ENCODE measurements at regions of chr2 and their contacts with region 1.

Region 1: GRCh38 chr2:166180951-166181812 is 53.4 kb upstream of the SCN1A start:
- DNase-seq: peak; percentile 51
- ATAC-seq: peak; percentile 60
- H3K4me3 Mint-ChIP-seq: no peak overlapping the region
- H3K27ac Mint-ChIP-seq: no peak overlapping the region
- H3K4me1 Mint-ChIP-seq: no peaks in the 10 kb centered on the region
- H3K27me3 Mint-ChIP-seq: no peaks in the 10 kb centered on the region

Region 2: GRCh38 chr2:166197446-166197845 is 16.3 kb after region 1 on chr2:
- CTCF ChIA-PET with region 1: interaction called, 12 read pairs
- POLR2A ChIA-PET with region 1: no interaction called
- DNase-seq: no peak
- ATAC-seq: no peak
- H3K4me3 Mint-ChIP-seq: no peak overlapping the region
- H3K27ac Mint-ChIP-seq: no peak overlapping the region
- H3K4me1 Mint-ChIP-seq: no peaks in the 10 kb centered on the region
- H3K27me3 Mint-ChIP-seq: no peaks in the 10 kb centered on the region

Region 3: DNA sequence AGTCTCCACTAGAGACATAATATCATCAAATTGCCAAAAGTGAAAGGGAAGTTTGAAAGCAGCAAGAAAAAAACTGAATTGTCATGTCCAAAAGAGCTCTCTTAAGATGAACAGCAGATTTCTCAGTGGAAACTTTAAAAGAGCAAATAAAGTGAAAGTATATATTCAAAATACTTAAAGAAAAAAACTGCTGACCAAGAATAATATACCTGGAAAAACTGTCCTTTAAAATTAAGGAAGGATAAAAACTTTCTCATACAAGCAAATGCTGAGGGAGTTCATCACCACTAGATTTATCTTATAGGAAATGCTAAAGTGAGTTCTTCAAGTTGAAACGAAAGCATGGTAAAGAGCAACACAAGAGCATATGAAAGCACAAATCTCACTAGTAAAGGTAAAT is 29.9 kb after region 1 on chr2:
- CTCF ChIA-PET with region 1: no interaction called
- POLR2A ChIA-PET with region 1: no interaction called
- DNase-seq: no peak
- ATAC-seq: no peak
- H3K4me3 Mint-ChIP-seq: no peak overlapping the region
- H3K27ac Mint-ChIP-seq: no peak overlapping the region
- H3K4me1 Mint-ChIP-seq: no peaks in the 10 kb centered on the region
- H3K27me3 Mint-ChIP-seq: no peaks in the 10 kb centered on the region

Measured in activated CD8-positive, alpha-beta T cell treated with anti-CD3 and anti-CD28 coated beads, Interleukin-2, amount 10 ng/mL, durations not matched to agents 7 days and 5 days (primary cell).